ENCODE measurements at regions of chr9 and their contacts with region 1.

Region 1: DNA sequence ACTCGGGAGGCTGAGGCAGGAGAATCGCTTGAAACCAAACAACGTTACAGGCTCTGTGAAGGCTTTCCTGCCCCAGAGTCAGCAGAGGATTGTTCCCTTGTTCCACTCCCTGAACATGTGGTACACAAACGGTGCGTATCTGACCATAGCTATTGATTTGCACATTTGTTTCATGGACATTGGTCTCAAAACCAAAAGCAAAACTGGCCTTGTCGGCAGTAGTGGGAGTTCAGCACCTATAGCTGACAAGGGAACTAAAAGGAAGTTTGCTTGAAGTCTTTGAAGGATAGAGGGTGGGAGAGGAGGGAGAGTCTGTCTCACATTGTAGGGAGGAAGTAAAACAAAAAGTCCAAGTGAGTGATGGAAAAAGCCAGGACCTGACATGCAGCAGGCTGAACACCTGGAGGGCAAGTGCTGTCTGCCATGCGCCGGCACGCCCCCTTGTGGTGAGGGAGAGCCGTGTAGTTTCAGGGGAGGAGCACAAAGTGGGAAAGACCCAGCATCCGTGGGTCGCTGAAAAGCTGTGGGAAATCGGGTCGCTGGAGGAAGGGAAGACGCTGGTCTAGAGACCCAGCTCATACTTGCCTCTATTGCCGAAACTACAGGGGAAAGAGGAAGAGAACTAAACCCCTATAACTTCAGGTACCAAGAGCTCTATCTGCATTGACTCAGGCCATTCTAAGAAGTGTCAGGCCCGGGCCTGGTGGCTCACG is 58.0 kb downstream of the RAD23B start:
- DNase-seq: peak; percentile 95
- H3K4me3 ChIP-seq: peak overlapping the region in 1 of 8 donors; percentile 40
- H3K27ac ChIP-seq: peak overlapping the region in 1 of 8 donors; percentile 23
- H3K4me1 ChIP-seq: peaks cover 0 to 13% (median 10%) of the 10 kb centered on the region in 6 donors
- H3K27me3 ChIP-seq: no peaks in the 10 kb centered on the region
- CTCF ChIP-seq: peak; percentile 80 to 92 (median 88)
- POLR2A ChIP-seq: no peak

Region 2: GRCh38 chr9:107239474-107239873 is 101.6 kb before region 1 on chr9:
- intact Hi-C with region 1: loop called (anchors 5 kb)
- DNase-seq: no peak
- H3K4me3 ChIP-seq: no peak overlapping the region
- H3K27ac ChIP-seq: no peak overlapping the region
- H3K4me1 ChIP-seq: no peaks in the 10 kb centered on the region
- H3K27me3 ChIP-seq: no peaks in the 10 kb centered on the region
- CTCF ChIP-seq: peak in 8 of 11 experiments; percentile 31 to 50 (median 40)
- POLR2A ChIP-seq: no peak

Region 3: GRCh38 chr9:107282753-107283625 is 58.1 kb before region 1 on chr9 and contains the start of gene RAD23B:
- intact Hi-C with region 1: loop called (anchors 10 kb)
- DNase-seq: peak; percentile 99
- H3K4me3 ChIP-seq: peak within 1 kb of the TSS; percentile 73 to 100 (median 95)
- H3K27ac ChIP-seq: peak within 1 kb of the TSS; percentile 90 to 100 (median 100)
- H3K4me1 ChIP-seq: peaks cover 33 to 63% (median 54%) of the 10 kb centered on the region in 6 donors
- H3K27me3 ChIP-seq: no peaks in the 10 kb centered on the region
- CTCF ChIP-seq: peak in 4 of 11 experiments; percentile 4 to 48 (median 28)
- POLR2A ChIP-seq: peak in 2 of 3 donors; percentile 48 to 76
- total RNA-seq, gene RAD23B: 52.8 to 91.9 (median 69.7) TPM